ENCODE measurements at regions of chr4 and their contacts with region 1.

Region 1: DNA sequence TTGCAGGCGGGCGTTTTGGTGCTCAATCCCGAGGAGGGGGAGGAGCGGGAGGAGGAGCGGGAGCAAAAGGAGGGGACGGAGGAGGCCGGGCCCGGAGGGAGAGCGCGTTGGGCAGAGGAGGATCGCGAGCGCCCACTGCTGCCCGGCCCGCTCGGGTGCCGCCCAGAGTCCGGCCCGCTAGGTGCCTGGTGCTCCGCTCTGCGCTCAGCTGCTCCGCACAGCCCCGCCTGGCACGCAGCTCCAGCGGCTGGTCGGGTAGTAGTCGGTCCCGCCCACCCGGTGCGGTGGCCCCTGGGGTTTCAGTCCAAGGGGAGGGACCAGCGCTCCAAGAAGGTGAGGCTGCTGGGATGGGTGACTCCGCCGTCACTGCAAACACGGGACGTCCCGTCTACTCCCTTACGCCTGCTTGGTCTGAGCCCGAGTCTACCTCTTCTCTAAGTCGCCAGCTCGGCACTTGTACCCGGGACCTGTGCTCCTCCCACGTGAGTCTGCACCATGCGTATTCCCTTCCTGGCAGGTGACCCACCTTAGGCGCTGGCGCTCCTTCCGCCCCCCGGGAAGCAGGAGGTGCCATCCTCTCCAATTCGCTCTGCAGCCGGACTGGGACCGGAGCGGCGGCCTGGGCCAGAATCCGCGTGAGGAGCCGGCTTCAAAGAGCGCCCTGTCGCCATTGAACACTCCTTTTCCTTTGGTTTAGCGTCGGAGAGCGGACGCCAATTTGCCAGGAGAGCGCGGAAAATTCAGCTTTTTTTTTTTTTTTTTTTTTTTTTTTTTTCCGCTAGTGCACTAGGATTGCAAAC is 405 bp upstream of the HS3ST1 start:
- DNase-seq: peak; percentile 94
- ATAC-seq: peak; percentile 91
- H3K4me3 ChIP-seq: peak overlapping the region; percentile 91 to 94
- H3K27ac ChIP-seq: peak overlapping the region; percentile 90
- H3K4me1 ChIP-seq: peaks cover 46 to 73% of the 10 kb centered on the region in 2 experiments
- H3K27me3 ChIP-seq: no peaks in the 10 kb centered on the region
- CTCF ChIP-seq: peak in 2 of 3 experiments; percentile 65 to 80; a peak in 4 of 6 replicates
- POLR2A ChIP-seq: peak; percentile 54
- RAD21 ChIP-seq: no peak

Region 2: GRCh38 chr4:10582059-10582686 is 846.9 kb before region 1 on chr4:
- CTCF ChIA-PET with region 1: interaction called, 3 read pairs
- POLR2A ChIA-PET with region 1: no interaction called
- RAD21 ChIA-PET with region 1: no interaction called
- intact Hi-C with region 1: loop called (anchors 5 kb)
- DNase-seq: peak; percentile 54
- ATAC-seq: peak; percentile 94
- H3K4me3 ChIP-seq: no peak overlapping the region
- H3K27ac ChIP-seq: no peak overlapping the region
- H3K4me1 ChIP-seq: peaks cover 0 to 9% of the 10 kb centered on the region in 2 experiments; a peak in 1 of 4 replicates
- H3K27me3 ChIP-seq: no peaks in the 10 kb centered on the region
- CTCF ChIP-seq: peak; percentile 72 to 94 (median 76)
- POLR2A ChIP-seq: no peak
- RAD21 ChIP-seq: peak; percentile 93

Region 3: DNA sequence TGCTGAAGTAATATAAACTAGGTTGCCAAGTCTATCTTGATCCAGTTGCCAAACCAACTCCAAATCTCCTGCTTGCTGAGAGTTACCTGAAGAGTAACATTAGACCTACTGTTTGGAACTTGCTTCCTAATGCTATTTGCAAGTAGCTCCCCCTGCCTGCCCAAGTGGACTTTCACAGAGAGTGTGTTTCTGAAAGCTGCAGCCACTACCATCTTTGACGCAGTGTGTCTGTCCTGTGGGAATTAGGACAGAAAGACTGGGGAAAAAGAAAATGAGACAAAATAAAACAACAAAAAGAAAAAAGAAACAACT is 194.6 kb after region 1 on chr4:
- CTCF ChIA-PET with region 1: interaction called, 3 read pairs
- POLR2A ChIA-PET with region 1: interaction called, 25 read pairs
- RAD21 ChIA-PET with region 1: no interaction called
- intact Hi-C with region 1: loop called (anchors 2 kb)
- DNase-seq: no peak
- ATAC-seq: peak; percentile 49
- H3K4me3 ChIP-seq: no peak overlapping the region
- H3K27ac ChIP-seq: peak overlapping the region; percentile 94
- H3K4me1 ChIP-seq: peaks cover 58 to 87% of the 10 kb centered on the region in 2 experiments
- H3K27me3 ChIP-seq: no peaks in the 10 kb centered on the region
- CTCF ChIP-seq: peak in 2 of 3 experiments; percentile 63 to 67; a peak in 4 of 6 replicates
- POLR2A ChIP-seq: no peak
- RAD21 ChIP-seq: no peak

Region 4: GRCh38 chr4:11720292-11720691 is 291.2 kb after region 1 on chr4:
- CTCF ChIA-PET with region 1: no interaction called
- POLR2A ChIA-PET with region 1: interaction called, 3 read pairs
- RAD21 ChIA-PET with region 1: no interaction called
- intact Hi-C with region 1: loop called (anchors 1 kb)
- DNase-seq: no peak
- ATAC-seq: peak; percentile 82
- H3K4me3 ChIP-seq: no peak overlapping the region
- H3K27ac ChIP-seq: peak overlapping the region; percentile 45
- H3K4me1 ChIP-seq: peaks cover 5 to 47% of the 10 kb centered on the region in 2 experiments; a peak in 3 of 4 replicates
- H3K27me3 ChIP-seq: no peaks in the 10 kb centered on the region
- CTCF ChIP-seq: peak; percentile 48 to 77 (median 74); a peak in 5 of 6 replicates
- POLR2A ChIP-seq: no peak
- RAD21 ChIP-seq: peak; percentile 92

Region 5: GRCh38 chr4:12633053-12633651 is 1204.1 kb after region 1 on chr4:
- CTCF ChIA-PET with region 1: no interaction called
- POLR2A ChIA-PET with region 1: no interaction called
- RAD21 ChIA-PET with region 1: no interaction called
- intact Hi-C with region 1: loop called (anchors 10 kb)
- DNase-seq: peak; percentile 79
- ATAC-seq: peak; percentile 100
- H3K4me3 ChIP-seq: no peak overlapping the region
- H3K27ac ChIP-seq: no peak overlapping the region
- H3K4me1 ChIP-seq: 0 out of 4 replicates have a peak, but pooled peaks cover 0 to 5% of the 10 kb centered on the region in 2 experiments
- H3K27me3 ChIP-seq: no peaks in the 10 kb centered on the region
- CTCF ChIP-seq: peak; percentile 66 to 91 (median 87)
- POLR2A ChIP-seq: no peak
- RAD21 ChIP-seq: peak; percentile 95